Natural killer cell (primary cell): ENCODE measurements at regions of chr21 and their contacts with region 1.

Region 1: DNA sequence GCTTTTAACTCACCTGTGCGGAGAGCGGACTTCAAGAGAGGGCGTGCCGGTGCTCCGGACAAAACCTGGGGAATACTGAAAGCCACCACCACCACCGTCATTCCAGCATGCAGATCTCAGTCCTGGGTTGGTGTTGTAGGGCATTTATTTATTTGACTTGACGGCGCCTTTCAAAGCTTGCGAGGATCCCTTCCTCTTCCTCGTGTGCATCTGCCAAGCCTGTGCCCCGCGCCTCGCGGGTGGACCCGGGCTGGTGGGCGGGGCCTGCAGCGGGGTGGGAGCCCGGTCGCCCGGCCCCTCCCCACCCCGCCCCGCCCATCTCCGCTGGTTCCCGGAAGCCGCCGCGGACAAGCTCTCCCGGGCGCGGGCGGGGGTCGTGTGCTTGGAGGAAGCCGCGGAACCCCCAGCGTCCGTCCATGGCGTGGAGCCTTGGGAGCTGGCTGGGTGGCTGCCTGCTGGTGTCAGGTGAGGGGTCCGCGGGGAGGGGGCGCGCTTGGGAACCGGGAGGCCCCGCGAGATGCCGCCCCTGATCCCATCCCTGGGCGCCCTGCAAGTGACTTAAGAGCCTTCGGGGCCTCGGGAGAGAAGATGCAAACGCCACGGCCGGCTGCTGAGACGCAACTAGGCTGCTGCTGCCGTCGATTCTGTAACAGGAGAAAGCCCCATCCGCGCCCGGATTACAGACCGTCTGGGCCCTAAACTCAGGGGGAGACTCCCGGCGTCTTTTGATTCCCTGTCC is at the start of gene IL10RB:
- DNase-seq: peak; percentile 59 to 87
- ATAC-seq: peak; percentile 82 to 88 (median 82)
- H3K4me3 ChIP-seq: peak within 1 kb of the TSS; percentile 97
- H3K4me3 Mint-ChIP-seq: peak within 1 kb of the TSS; percentile 98
- H3K27ac ChIP-seq: peak within 1 kb of the TSS; percentile 88
- H3K27ac Mint-ChIP-seq: peak within 1 kb of the TSS; percentile 94 to 95
- H3K4me1 ChIP-seq: peaks cover 59% of the 10 kb centered on the region
- H3K4me1 Mint-ChIP-seq: peaks cover 61 to 66% of the 10 kb centered on the region in 2 donors
- H3K27me3 ChIP-seq: no peaks in the 10 kb centered on the region
- H3K27me3 Mint-ChIP-seq: no peaks in the 10 kb centered on the region
- CTCF ChIP-seq: no peak
- total RNA-seq, gene IL10RB: 18.4 to 27.8 (median 27.3) TPM

Region 2: GRCh38 chr21:32921632-32922230 is 344.5 kb before region 1 on chr21:
- intact Hi-C with region 1: no loop called
- DNase-seq: peak; percentile 47 to 68
- ATAC-seq: peak; percentile 50 to 60 (median 55)
- H3K4me3 ChIP-seq: no peak overlapping the region
- H3K4me3 Mint-ChIP-seq: no peak overlapping the region
- H3K27ac ChIP-seq: no peak overlapping the region
- H3K27ac Mint-ChIP-seq: no peak overlapping the region
- H3K4me1 ChIP-seq: peaks cover 9% of the 10 kb centered on the region
- H3K4me1 Mint-ChIP-seq: peaks cover 20 to 23% of the 10 kb centered on the region in 2 donors
- H3K27me3 ChIP-seq: no peaks in the 10 kb centered on the region
- H3K27me3 Mint-ChIP-seq: peaks cover 8 to 13% of the 10 kb centered on the region in 2 donors
- CTCF ChIP-seq: peak; percentile 75

Region 3: DNA sequence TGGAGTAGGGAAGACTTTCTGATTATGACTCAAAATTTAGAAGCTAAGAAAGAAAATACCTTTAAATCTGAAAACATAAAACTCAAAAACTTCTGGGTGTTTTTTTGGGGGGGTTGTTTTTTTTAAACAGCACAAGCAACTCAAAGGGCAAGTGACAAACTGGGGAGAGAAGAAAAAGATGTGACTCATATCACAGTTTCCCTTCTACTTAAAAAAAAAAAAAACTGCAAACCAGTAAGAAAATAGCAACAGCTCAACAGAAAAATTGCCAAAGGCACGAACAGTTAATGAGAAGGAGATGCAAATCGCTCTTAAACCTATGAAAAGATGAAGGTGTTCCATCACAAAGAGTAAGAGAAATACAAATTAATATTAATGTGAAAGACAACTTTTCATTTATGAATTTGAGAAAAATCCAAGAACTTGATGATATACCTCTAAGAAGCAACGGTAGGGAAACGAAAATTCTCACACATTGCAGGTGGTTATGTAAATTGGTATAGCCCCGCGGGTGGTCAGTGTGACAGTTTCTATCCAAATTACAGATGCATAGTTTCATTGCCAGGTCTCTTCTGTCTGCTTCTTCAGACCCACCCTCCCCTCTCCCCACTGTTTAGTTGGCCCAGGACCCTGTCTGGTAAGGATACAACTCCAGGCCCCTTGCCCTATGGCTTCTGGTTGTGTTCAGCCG is 27.5 kb before region 1 on chr21:
- intact Hi-C with region 1: loop called (anchors 2 kb)
- DNase-seq: peak in 1 of 2 donors; percentile 64
- ATAC-seq: peak; percentile 67 to 78 (median 71)
- H3K4me3 ChIP-seq: no peak overlapping the region
- H3K4me3 Mint-ChIP-seq: peak overlapping the region; percentile 85
- H3K27ac ChIP-seq: peak overlapping the region; percentile 84
- H3K27ac Mint-ChIP-seq: peak overlapping the region; percentile 91 to 97
- H3K4me1 ChIP-seq: peaks cover 76% of the 10 kb centered on the region
- H3K4me1 Mint-ChIP-seq: peaks cover 83 to 86% of the 10 kb centered on the region in 2 donors
- H3K27me3 ChIP-seq: no peaks in the 10 kb centered on the region
- H3K27me3 Mint-ChIP-seq: no peaks in the 10 kb centered on the region
- CTCF ChIP-seq: no peak

Region 4: GRCh38 chr21:33317145-33317544 is 50.9 kb after region 1 on chr21:
- intact Hi-C with region 1: loop called (anchors 10 kb)
- DNase-seq: no peak
- ATAC-seq: no peak
- H3K4me3 ChIP-seq: no peak overlapping the region
- H3K4me3 Mint-ChIP-seq: no peak overlapping the region
- H3K27ac ChIP-seq: no peak overlapping the region
- H3K27ac Mint-ChIP-seq: no peak overlapping the region
- H3K4me1 ChIP-seq: no peaks in the 10 kb centered on the region
- H3K4me1 Mint-ChIP-seq: no peaks in the 10 kb centered on the region
- H3K27me3 ChIP-seq: no peaks in the 10 kb centered on the region
- H3K27me3 Mint-ChIP-seq: peaks cover 12 to 24% of the 10 kb centered on the region in 2 donors
- CTCF ChIP-seq: no peak